Aorta (tissue), 5 donors: ENCODE measurements at regions of chr15 and their contacts with region 1.

Region 1: GRCh38 chr15:75578948-75579920 is at the start of gene PTPN9:
- DNase-seq: peak; percentile 86 to 93
- ATAC-seq: peak; percentile 90
- H3K4me3 ChIP-seq: peak within 1 kb of the TSS; percentile 38 to 99
- H3K27ac ChIP-seq: peak within 1 kb of the TSS; percentile 50 to 70
- H3K4me1 ChIP-seq: no peaks in the 10 kb centered on the region
- H3K27me3 ChIP-seq: no peaks in the 10 kb centered on the region
- total RNA-seq, gene PTPN9: 25.0 to 37.9 TPM

Region 2: GRCh38 chr15:75493732-75494131 is 85.5 kb before region 1 on chr15:
- intact Hi-C with region 1: no loop called
- DNase-seq: no peak
- ATAC-seq: no peak
- H3K4me3 ChIP-seq: no peak overlapping the region
- H3K27ac ChIP-seq: no peak overlapping the region
- H3K4me1 ChIP-seq: no peaks in the 10 kb centered on the region
- H3K27me3 ChIP-seq: no peaks in the 10 kb centered on the region

Region 3: GRCh38 chr15:75517233-75517632 is 62.0 kb before region 1 on chr15:
- intact Hi-C with region 1: no loop called
- DNase-seq: no peak
- ATAC-seq: no peak
- H3K4me3 ChIP-seq: no peak overlapping the region
- H3K27ac ChIP-seq: no peak overlapping the region
- H3K4me1 ChIP-seq: no peaks in the 10 kb centered on the region
- H3K27me3 ChIP-seq: no peaks in the 10 kb centered on the region

Region 4: GRCh38 chr15:75532413-75533147 is 46.7 kb before region 1 on chr15:
- intact Hi-C with region 1: loop called in 1 of 2 experiments (anchors 5 kb)
- DNase-seq: peak in 1 of 2 donors; percentile 59
- ATAC-seq: peak; percentile 91
- H3K4me3 ChIP-seq: no peak overlapping the region
- H3K27ac ChIP-seq: peak overlapping the region in 1 of 2 donors; percentile 85
- H3K4me1 ChIP-seq: no peaks in the 10 kb centered on the region
- H3K27me3 ChIP-seq: no peaks in the 10 kb centered on the region